K562 (cell line): ENCODE measurements at regions of chr9 and their contacts with region 1.

Region 1: DNA sequence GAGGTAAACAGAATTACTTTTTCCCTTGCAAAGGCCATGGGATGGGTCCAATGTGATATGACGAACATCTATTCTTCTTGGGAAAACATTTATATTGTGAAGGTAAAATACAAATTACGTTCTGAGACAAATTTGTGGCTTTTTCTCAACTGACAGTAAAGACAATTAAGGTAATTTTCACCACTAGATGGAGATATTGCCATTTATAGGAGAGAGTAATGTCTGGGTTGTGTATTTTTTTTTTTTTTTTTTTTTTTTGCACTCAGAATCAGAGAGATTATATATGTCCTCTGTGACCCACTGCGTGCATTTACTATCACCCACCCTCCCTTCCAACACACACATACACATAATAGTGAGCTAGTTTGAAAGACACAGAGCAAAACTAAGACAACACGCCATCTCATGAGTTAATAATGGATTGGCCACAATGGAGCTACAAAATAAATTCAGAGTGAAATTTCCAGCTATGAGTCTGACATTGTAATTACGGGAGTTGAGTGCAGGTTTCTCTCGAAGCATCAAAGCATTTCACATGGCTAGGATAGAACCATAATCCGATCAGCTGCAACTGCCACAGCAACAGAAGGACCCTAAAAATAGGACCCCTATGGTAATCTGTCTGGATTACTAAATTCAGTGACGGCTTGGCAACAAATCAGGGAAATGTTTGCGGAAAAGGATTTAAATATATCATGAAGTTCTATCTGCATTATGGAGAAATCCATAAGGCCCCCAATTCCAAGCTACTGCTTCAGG is 49.2 kb downstream of the ANXA1 start:
- DNase-seq: peak in 3 of 4 experiments; percentile 8 to 43 (median 13)
- ATAC-seq: peak; percentile 86
- H3K4me3 ChIP-seq: no peak overlapping the region
- H3K27ac ChIP-seq: no peak overlapping the region
- H3K4me1 ChIP-seq: no peaks in the 10 kb centered on the region
- H3K27me3 ChIP-seq: no peaks in the 10 kb centered on the region
- CTCF ChIP-seq: peak; percentile 36 to 68 (median 40); a peak in 5 of 6 replicates
- EP300 ChIP-seq: no peak
- POLR2A ChIP-seq: no peak
- RAD21 ChIP-seq: peak; percentile 60 to 65

Region 2: GRCh38 chr9:72919246-72919945 is 281.5 kb before region 1 on chr9:
- CTCF ChIA-PET with region 1: no interaction called
- POLR2A ChIA-PET with region 1: no interaction called
- in situ Hi-C with region 1: no loop called
- intact Hi-C with region 1: no loop called
- DNase-seq: no peak
- ATAC-seq: no peak
- H3K4me3 ChIP-seq: no peak overlapping the region
- H3K27ac ChIP-seq: no peak overlapping the region
- H3K4me1 ChIP-seq: no peaks in the 10 kb centered on the region
- H3K27me3 ChIP-seq: no peaks in the 10 kb centered on the region
- CTCF ChIP-seq: no peak
- EP300 ChIP-seq: no peak
- POLR2A ChIP-seq: no peak
- RAD21 ChIP-seq: no peak

Region 3: GRCh38 chr9:73149371-73150067 is 51.4 kb before region 1 on chr9:
- CTCF ChIA-PET with region 1: no interaction called
- POLR2A ChIA-PET with region 1: no interaction called
- in situ Hi-C with region 1: no loop called
- intact Hi-C with region 1: no loop called
- DNase-seq: peak; percentile 44 to 69 (median 48)
- ATAC-seq: peak; percentile 43
- H3K4me3 ChIP-seq: no peak overlapping the region
- H3K27ac ChIP-seq: peak overlapping the region; percentile 90
- H3K4me1 ChIP-seq: peaks cover 8 to 45% of the 10 kb centered on the region in 2 experiments; a peak in 4 of 5 replicates
- H3K27me3 ChIP-seq: no peaks in the 10 kb centered on the region
- CTCF ChIP-seq: no peak
- EP300 ChIP-seq: peak; percentile 70; the same call in 1 of the 2 replicates
- POLR2A ChIP-seq: no peak
- RAD21 ChIP-seq: no peak

Region 4: GRCh38 chr9:73269430-73270101 is 68.7 kb after region 1 on chr9:
- CTCF ChIA-PET with region 1: no interaction called
- POLR2A ChIA-PET with region 1: no interaction called
- in situ Hi-C with region 1: no loop called
- intact Hi-C with region 1: loop called (anchors 2 kb)
- DNase-seq: peak in 2 of 4 experiments; percentile 7 to 37
- ATAC-seq: peak; percentile 66
- H3K4me3 ChIP-seq: no peak overlapping the region
- H3K27ac ChIP-seq: no peak overlapping the region
- H3K4me1 ChIP-seq: no peaks in the 10 kb centered on the region
- H3K27me3 ChIP-seq: no peaks in the 10 kb centered on the region
- CTCF ChIP-seq: peak; percentile 28 to 55 (median 38); a peak in 4 of 6 replicates
- EP300 ChIP-seq: no peak
- POLR2A ChIP-seq: no peak
- RAD21 ChIP-seq: peak; percentile 60 to 65

Region 5: GRCh38 chr9:73402081-73403028 is 201.5 kb after region 1 on chr9:
- CTCF ChIA-PET with region 1: no interaction called
- POLR2A ChIA-PET with region 1: no interaction called
- in situ Hi-C with region 1: no loop called
- intact Hi-C with region 1: no loop called
- DNase-seq: no peak
- ATAC-seq: no peak
- H3K4me3 ChIP-seq: no peak overlapping the region
- H3K27ac ChIP-seq: no peak overlapping the region
- H3K4me1 ChIP-seq: no peaks in the 10 kb centered on the region
- H3K27me3 ChIP-seq: no peaks in the 10 kb centered on the region
- CTCF ChIP-seq: no peak
- EP300 ChIP-seq: no peak
- POLR2A ChIP-seq: no peak
- RAD21 ChIP-seq: no peak

Region 6: GRCh38 chr9:73565833-73566465 is 365.1 kb after region 1 on chr9:
- CTCF ChIA-PET with region 1: interaction called, 11 read pairs
- POLR2A ChIA-PET with region 1: no interaction called
- in situ Hi-C with region 1: no loop called
- intact Hi-C with region 1: loop called (anchors 5 kb)
- DNase-seq: peak in 1 of 4 experiments; percentile 30
- ATAC-seq: no peak
- H3K4me3 ChIP-seq: no peak overlapping the region
- H3K27ac ChIP-seq: no peak overlapping the region
- H3K4me1 ChIP-seq: no peaks in the 10 kb centered on the region
- H3K27me3 ChIP-seq: no peaks in the 10 kb centered on the region
- CTCF ChIP-seq: peak; percentile 35 to 59 (median 43); a peak in 4 of 6 replicates
- EP300 ChIP-seq: no peak
- POLR2A ChIP-seq: no peak
- RAD21 ChIP-seq: peak; percentile 45 to 56

Region 7: GRCh38 chr9:74570879-74571512 is 1370.1 kb after region 1 on chr9:
- CTCF ChIA-PET with region 1: interaction called, 9 read pairs
- POLR2A ChIA-PET with region 1: no interaction called
- in situ Hi-C with region 1: loop called (anchors 25 kb)
- intact Hi-C with region 1: loop called (anchors 2 kb)
- DNase-seq: peak; percentile 11 to 21 (median 13)
- ATAC-seq: peak; percentile 54; the same call in 1 of the 3 replicates
- H3K4me3 ChIP-seq: no peak overlapping the region
- H3K27ac ChIP-seq: no peak overlapping the region
- H3K4me1 ChIP-seq: no peaks in the 10 kb centered on the region
- H3K27me3 ChIP-seq: no peaks in the 10 kb centered on the region
- CTCF ChIP-seq: peak; percentile 36 to 65 (median 45); a peak in 5 of 6 replicates
- EP300 ChIP-seq: no peak
- POLR2A ChIP-seq: no peak
- RAD21 ChIP-seq: peak; percentile 41 to 64; a peak in 3 of 4 replicates

Region 8: DNA sequence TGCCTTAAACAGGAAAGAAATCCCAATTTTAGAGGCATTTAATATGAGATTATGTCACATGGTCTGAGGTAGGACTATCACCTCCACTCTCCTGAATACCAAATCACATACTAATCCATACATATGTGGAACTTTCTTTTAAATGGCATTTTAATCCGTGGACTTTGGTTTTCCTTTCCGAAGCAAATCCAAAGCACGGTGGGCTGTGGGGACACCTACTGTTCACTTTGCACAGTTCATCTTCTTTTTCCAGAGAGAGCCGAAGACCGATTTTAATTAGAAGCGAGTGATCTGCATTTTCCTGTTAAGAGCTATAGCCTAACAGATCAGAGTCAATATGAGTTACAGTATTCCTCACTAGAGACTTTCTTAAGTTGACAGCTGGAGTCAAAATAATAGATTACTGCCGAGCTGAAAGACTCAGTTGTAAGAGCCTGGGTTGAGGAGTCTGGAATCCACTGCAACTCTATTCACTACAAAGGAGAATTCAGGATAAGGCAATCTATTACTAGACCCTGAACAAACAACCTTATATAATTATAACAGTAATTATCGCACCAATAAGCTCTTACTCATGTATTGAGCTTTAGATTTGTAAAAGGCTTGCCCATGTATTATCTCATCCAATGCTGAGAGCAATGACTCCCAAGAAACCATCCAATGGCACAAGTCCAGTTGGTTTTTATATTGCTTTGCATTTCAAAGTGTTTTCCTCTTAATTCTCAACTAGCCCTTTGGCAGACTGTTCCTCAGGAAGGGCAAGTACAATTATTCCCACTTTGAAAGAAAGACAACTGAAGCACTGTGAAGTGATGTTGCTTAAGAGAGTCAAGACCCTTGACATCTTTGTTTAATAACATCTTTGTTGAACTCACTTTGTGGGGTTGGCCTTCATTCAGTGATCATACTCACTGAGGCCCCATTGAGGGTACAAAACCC is 1542.2 kb after region 1 on chr9:
- CTCF ChIA-PET with region 1: interaction called, 4 read pairs
- POLR2A ChIA-PET with region 1: no interaction called
- in situ Hi-C with region 1: no loop called
- intact Hi-C with region 1: loop called (anchors 10 kb)
- DNase-seq: peak; percentile 8 to 23 (median 10)
- ATAC-seq: 0 out of 3 replicates have a peak, but pooled peaks have one; percentile 39
- H3K4me3 ChIP-seq: no peak overlapping the region
- H3K27ac ChIP-seq: no peak overlapping the region
- H3K4me1 ChIP-seq: no peaks in the 10 kb centered on the region
- H3K27me3 ChIP-seq: no peaks in the 10 kb centered on the region
- CTCF ChIP-seq: peak; percentile 34 to 56 (median 54); a peak in 4 of 6 replicates
- EP300 ChIP-seq: no peak
- POLR2A ChIP-seq: no peak
- RAD21 ChIP-seq: peak; percentile 53 to 56